ENCODE measurements at regions of chr9 and their contacts with region 1.

Region 1: GRCh38 chr9:82532504-82533180 is 530.3 kb downstream of the RASEF start:
- DNase-seq: no peak
- ATAC-seq: no peak
- H3K4me3 ChIP-seq: no peak overlapping the region
- H3K27ac ChIP-seq: no peak overlapping the region
- H3K4me1 ChIP-seq: no peaks in the 10 kb centered on the region
- H3K27me3 ChIP-seq: no peaks in the 10 kb centered on the region
- CTCF ChIP-seq: no peak; a peak in 1 of 6 replicates
- EP300 ChIP-seq: no peak
- POLR2A ChIP-seq: no peak
- RAD21 ChIP-seq: no peak

Region 2: DNA sequence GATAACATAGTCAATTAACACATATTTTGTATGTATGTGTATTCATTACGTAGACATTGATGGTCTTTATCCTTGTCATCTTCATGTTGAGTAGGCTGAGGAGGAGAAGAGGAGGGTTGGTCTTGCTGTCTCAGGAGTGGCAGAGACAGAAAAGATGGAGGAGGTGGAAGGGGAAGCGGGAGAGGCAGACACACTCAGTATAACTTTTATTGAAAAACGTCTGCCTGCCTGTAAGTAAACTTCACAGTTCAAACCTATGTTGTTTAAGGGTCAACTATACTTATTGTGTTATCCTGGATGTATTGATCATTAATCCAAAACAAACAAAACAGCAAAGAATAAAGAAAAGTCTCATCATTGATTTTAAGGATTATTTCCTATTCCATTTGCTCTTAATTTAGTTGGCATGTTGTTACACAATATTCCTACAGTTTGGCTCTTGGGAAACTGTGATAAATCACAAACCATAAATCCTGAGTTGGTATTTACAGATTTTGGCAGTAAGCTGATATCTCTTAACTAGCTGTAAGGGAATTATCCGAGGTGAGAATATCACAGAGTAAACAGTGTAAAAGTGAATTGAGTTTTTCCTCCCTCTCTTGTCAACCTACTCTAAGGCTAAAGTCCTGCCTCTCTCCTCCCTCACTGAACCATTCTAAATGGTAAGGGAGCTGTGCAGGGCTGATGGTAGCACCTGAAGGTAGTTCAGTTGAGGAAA is 56.9 kb before region 1 on chr9:
- CTCF ChIA-PET with region 1: no interaction called
- POLR2A ChIA-PET with region 1: no interaction called
- RAD21 ChIA-PET with region 1: no interaction called
- SMC1A ChIA-PET with region 1: no interaction called
- in situ Hi-C with region 1: no loop called
- intact Hi-C with region 1: loop called (anchors 10 kb)
- DNase-seq: no peak
- ATAC-seq: no peak
- H3K4me3 ChIP-seq: no peak overlapping the region
- H3K27ac ChIP-seq: no peak overlapping the region
- H3K4me1 ChIP-seq: no peaks in the 10 kb centered on the region
- H3K27me3 ChIP-seq: no peaks in the 10 kb centered on the region
- CTCF ChIP-seq: no peak
- EP300 ChIP-seq: no peak
- POLR2A ChIP-seq: no peak
- RAD21 ChIP-seq: no peak

Region 3: DNA sequence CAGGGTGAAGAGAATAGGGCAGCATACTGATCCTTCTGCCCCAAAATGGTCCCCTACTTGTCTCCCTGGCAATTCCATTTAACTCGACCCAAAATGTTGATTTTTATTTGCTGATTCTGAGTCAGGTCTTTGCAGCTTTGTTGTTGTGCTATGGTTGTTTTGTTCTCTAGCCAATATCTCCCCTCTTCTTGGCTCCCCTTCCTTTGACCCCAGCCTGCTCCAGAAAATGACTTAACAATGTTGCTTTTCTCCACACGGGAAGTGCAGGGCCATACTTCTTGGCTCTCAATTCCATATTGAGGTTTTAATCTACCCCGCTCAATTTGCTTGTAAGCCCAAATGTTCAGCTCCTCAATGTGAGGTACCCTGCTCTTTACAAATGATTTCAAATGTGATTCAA is 200.3 kb after region 1 on chr9:
- CTCF ChIA-PET with region 1: no interaction called
- POLR2A ChIA-PET with region 1: no interaction called
- RAD21 ChIA-PET with region 1: no interaction called
- SMC1A ChIA-PET with region 1: no interaction called
- in situ Hi-C with region 1: no loop called
- intact Hi-C with region 1: no loop called
- DNase-seq: no peak
- ATAC-seq: no peak
- H3K4me3 ChIP-seq: no peak overlapping the region
- H3K27ac ChIP-seq: no peak overlapping the region
- H3K4me1 ChIP-seq: no peaks in the 10 kb centered on the region
- H3K27me3 ChIP-seq: no peaks in the 10 kb centered on the region
- CTCF ChIP-seq: no peak
- EP300 ChIP-seq: no peak
- POLR2A ChIP-seq: no peak
- RAD21 ChIP-seq: no peak

Region 4: DNA sequence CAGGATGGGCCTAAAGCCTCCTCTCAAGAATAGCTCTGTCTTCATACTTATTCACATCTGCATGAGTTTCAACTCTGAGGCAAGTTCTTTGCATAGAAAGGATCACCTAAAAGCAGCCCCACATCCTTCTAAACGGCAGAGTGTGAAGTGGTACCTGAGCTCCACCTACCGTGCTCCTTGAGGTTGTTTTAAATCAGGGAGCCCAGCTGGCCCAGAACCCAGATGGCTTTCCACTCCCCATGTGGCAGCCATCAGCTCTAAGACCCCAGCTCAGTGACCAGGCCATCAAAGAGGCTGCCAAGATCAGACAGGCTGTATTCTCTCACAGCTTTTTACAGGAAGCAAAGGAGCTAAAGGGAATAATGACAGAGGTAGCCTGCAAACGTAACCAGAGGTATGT is 231.0 kb after region 1 on chr9:
- CTCF ChIA-PET with region 1: no interaction called
- POLR2A ChIA-PET with region 1: no interaction called
- RAD21 ChIA-PET with region 1: no interaction called
- SMC1A ChIA-PET with region 1: no interaction called
- in situ Hi-C with region 1: no loop called
- intact Hi-C with region 1: loop called (anchors 10 kb)
- DNase-seq: no peak
- ATAC-seq: peak; percentile 37; the same call in 1 of the 3 replicates
- H3K4me3 ChIP-seq: no peak overlapping the region
- H3K27ac ChIP-seq: no peak overlapping the region
- H3K4me1 ChIP-seq: no peaks in the 10 kb centered on the region
- H3K27me3 ChIP-seq: no peaks in the 10 kb centered on the region
- CTCF ChIP-seq: peak in 1 of 3 experiments; percentile 32; a peak in 2 of 6 replicates
- EP300 ChIP-seq: no peak
- POLR2A ChIP-seq: no peak
- RAD21 ChIP-seq: 0 out of 2 replicates have a peak, but pooled peaks have one; percentile 28

Region 5: DNA sequence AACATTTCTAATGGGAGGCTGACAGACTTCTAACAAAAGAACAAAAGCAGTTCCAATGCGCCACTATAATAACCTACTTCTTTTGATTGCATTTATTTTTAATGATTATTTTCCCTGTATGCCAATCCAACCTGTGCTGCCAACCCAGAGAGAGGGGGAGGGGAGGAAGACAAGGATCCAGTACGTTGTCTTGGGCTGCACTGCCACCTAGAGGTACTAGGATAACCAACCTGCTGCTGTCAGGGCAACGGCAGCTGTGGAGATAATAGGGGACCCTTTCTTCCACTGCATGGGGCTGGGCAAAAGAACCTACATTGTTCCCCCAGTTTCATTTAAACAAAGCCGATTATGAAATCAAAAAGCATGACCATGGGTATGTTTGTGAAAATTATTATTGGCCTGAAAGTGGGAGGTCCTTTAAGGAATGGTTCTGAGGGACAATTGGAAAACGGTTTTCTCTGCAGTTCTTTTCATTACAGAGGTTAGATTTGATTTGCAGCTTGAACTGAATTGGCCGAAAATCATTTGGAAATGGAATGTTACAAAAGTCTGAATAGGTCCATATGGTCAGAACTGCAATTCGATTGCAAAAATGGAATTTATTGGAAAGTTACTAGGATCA is 429.0 kb after region 1 on chr9:
- CTCF ChIA-PET with region 1: no interaction called
- POLR2A ChIA-PET with region 1: no interaction called
- RAD21 ChIA-PET with region 1: no interaction called
- SMC1A ChIA-PET with region 1: no interaction called
- in situ Hi-C with region 1: no loop called
- intact Hi-C with region 1: loop called (anchors 2 kb)
- DNase-seq: peak; percentile 11
- ATAC-seq: peak; percentile 95
- H3K4me3 ChIP-seq: no peak overlapping the region
- H3K27ac ChIP-seq: no peak overlapping the region
- H3K4me1 ChIP-seq: no peaks in the 10 kb centered on the region
- H3K27me3 ChIP-seq: no peaks in the 10 kb centered on the region
- CTCF ChIP-seq: peak; percentile 75 to 84 (median 80); a peak in 5 of 6 replicates
- EP300 ChIP-seq: no peak
- POLR2A ChIP-seq: no peak
- RAD21 ChIP-seq: peak; percentile 84